CD4-positive, alpha-beta T cell (primary cell): ENCODE measurements at regions of chr3 and their contacts with region 1.

Region 1: GRCh38 chr3:109784852-109785631 is 447.7 kb upstream of the DPPA4 start:
- DNase-seq: no peak
- ATAC-seq: no peak
- H3K4me3 ChIP-seq: no peak overlapping the region
- H3K4me3 Mint-ChIP-seq: no peak overlapping the region
- H3K27ac ChIP-seq: no peak overlapping the region
- H3K27ac Mint-ChIP-seq: no peak overlapping the region
- H3K4me1 ChIP-seq: no peaks in the 10 kb centered on the region
- H3K4me1 Mint-ChIP-seq: no peaks in the 10 kb centered on the region
- H3K27me3 ChIP-seq: no peaks in the 10 kb centered on the region
- H3K27me3 Mint-ChIP-seq: no peaks in the 10 kb centered on the region
- CTCF ChIP-seq: no peak

Region 2: GRCh38 chr3:109831403-109831802 is 46.4 kb after region 1 on chr3:
- CTCF ChIA-PET with region 1: no interaction called
- POLR2A ChIA-PET with region 1: no interaction called
- intact Hi-C with region 1: loop called in 1 of 2 experiments (anchors 5 kb)
- DNase-seq: no peak
- ATAC-seq: no peak
- H3K4me3 ChIP-seq: no peak overlapping the region
- H3K4me3 Mint-ChIP-seq: no peak overlapping the region
- H3K27ac ChIP-seq: no peak overlapping the region
- H3K27ac Mint-ChIP-seq: no peak overlapping the region
- H3K4me1 ChIP-seq: no peaks in the 10 kb centered on the region
- H3K4me1 Mint-ChIP-seq: no peaks in the 10 kb centered on the region
- H3K27me3 ChIP-seq: no peaks in the 10 kb centered on the region
- H3K27me3 Mint-ChIP-seq: no peaks in the 10 kb centered on the region
- CTCF ChIP-seq: no peak